ENCODE measurements at regions of chr15 and their contacts with region 1.

Region 1: DNA sequence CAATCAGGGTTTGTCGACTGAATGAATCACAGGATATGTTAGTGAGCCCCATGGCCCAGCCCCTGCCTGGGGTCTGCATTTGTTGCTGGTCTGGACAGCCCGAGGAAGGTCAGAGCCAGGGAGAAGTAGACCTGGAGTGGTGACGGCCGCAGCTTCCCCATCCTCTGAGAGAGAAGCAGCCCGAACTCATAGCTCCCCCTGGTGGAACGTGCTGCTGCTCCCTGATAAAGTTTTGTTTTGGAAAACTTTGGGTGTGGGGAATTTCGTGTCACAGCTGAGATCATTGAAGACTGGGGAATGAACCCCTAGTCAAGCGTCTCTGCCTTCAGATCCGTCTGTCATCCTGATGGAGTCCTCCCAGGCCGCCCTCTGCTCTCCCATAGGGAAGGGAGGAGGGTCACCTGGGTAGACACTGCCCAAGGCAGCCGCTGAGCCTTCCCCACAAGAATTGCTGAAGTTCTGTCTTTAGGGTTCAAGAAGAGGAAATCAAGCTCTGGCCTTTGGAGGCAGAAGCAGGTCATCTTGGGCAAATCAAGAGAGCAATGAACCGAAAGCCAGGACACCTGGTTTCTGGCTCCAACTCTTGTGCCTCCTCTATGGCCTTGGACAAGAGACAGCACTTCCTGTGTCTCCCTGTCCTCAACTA is 60.5 kb downstream of the GLDN start:
- DNase-seq: peak; percentile 13
- H3K4me3 ChIP-seq: no peak overlapping the region
- H3K27ac ChIP-seq: no peak overlapping the region
- H3K4me1 ChIP-seq: no peaks in the 10 kb centered on the region
- H3K27me3 ChIP-seq: peaks cover 68 to 69% of the 10 kb centered on the region in 2 experiments
- CTCF ChIP-seq: peak; percentile 73 to 83
- POLR2A ChIP-seq: no peak

Region 2: DNA sequence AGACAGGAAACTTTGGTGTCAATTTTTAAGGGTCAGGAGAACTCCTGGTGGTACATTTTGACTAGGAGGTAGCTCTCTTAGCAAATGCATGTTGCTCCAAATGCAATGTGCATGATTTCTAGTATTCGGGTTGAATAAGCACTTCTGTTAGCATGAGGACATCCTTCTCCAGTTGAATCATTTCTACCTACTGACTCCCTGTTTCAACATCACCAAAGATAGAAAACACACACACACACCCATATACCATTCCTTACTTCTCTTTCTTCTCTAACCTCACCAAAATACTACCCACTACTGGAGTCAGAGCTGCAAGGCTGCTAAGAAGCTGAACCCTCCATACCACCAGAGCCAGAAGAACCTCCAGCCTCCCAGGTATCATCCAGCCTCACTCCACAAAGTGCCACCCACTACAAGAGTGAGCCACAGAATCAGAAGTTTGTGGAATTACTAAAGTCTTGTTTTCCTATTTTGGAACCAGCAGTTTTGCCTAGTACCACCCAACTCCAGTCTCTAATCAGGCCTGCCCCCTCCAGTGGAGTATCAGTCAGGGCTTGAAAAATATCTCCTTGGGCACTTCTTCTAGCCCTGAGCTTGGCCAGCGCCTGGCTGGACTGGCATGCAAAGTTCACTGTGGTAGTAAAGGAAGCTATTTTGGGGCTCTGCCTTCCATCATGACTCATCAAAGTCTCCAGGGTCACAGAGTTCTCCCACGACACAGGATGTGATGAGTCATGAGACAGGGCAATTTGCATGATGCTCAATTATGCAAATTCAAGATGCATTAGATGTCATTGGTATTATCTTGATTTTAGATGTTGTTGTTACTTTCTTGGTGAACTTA is 173.8 kb before region 1 on chr15:
- CTCF ChIA-PET with region 1: interaction called, 32 read pairs
- POLR2A ChIA-PET with region 1: no interaction called
- dilution Hi-C with region 1: no loop called
- intact Hi-C with region 1: loop called (anchors 1 kb)
- DNase-seq: peak; percentile 60
- H3K4me3 ChIP-seq: no peak overlapping the region
- H3K27ac ChIP-seq: peak overlapping the region; percentile 11
- H3K4me1 ChIP-seq: peaks cover 27% of the 10 kb centered on the region
- H3K27me3 ChIP-seq: peaks cover 21 to 24% of the 10 kb centered on the region in 2 experiments
- CTCF ChIP-seq: no peak
- POLR2A ChIP-seq: no peak

Region 3: DNA sequence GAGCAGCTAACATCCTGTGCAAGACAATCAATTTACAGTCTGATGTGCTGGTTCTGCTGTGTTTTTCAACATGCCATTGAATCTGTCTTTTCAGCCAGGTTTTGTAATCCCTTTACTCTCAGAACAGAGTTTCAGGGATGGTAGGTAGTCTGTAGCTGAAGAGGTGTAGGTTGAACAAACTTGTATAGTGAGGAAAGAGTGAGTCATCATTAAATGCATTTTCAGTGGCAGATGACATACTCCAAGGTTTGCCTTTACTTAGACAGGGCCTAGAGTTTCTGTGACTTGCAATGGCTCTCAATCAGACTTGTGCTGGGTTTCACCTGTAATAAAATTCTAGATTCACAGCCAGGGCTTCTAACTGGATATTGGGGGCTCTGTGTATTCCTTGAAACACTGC is 158.2 kb before region 1 on chr15:
- CTCF ChIA-PET with region 1: no interaction called
- POLR2A ChIA-PET with region 1: no interaction called
- dilution Hi-C with region 1: no loop called
- intact Hi-C with region 1: no loop called
- DNase-seq: no peak
- H3K4me3 ChIP-seq: no peak overlapping the region
- H3K27ac ChIP-seq: no peak overlapping the region
- H3K4me1 ChIP-seq: no peaks in the 10 kb centered on the region
- H3K27me3 ChIP-seq: peaks cover 56 to 57% of the 10 kb centered on the region in 2 experiments
- CTCF ChIP-seq: no peak
- POLR2A ChIP-seq: no peak

Region 4: DNA sequence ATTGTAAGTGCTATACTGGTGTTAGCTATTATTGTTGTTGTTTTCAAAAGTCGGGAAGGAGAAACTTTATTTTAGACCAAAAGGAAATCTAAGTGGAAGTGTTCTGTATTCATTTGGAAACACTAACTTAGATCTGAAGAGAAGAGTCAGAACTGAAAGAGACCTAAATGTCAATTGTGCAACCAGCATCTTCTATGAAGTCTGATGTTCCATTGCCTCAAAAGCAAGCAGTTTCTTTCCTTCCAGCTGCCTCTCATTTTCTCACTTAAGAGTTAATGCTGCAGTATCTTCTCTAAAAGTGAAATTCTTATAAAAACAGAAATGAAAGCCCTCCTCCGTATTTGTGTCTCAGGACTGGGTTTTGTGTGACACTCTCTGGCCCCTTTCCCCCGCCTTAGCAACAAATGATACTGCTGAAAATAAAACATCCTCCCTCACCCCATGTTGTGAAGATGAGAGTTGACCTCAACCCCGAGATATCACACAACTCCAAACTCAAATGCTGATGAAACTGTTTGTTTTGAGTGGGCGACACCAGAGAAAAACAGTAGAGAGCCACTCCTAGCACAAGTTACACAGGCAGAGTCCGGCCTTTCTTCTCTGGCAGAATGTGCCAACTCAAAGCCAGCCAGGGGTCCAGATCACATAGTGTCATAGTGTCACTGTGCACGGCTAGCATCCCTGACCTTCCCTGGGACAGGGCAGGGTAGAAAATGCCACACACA is 11.6 kb before region 1 on chr15:
- CTCF ChIA-PET with region 1: interaction called, 12 read pairs
- POLR2A ChIA-PET with region 1: no interaction called
- dilution Hi-C with region 1: no loop called
- intact Hi-C with region 1: no loop called
- DNase-seq: no peak
- H3K4me3 ChIP-seq: no peak overlapping the region
- H3K27ac ChIP-seq: no peak overlapping the region
- H3K4me1 ChIP-seq: no peaks in the 10 kb centered on the region
- H3K27me3 ChIP-seq: peaks cover 30 to 31% of the 10 kb centered on the region in 2 experiments
- CTCF ChIP-seq: no peak
- POLR2A ChIP-seq: no peak

Region 5: GRCh38 chr15:51425517-51426367 is 23.7 kb after region 1 on chr15:
- CTCF ChIA-PET with region 1: interaction called, 10 read pairs
- POLR2A ChIA-PET with region 1: interaction called, 4 read pairs
- dilution Hi-C with region 1: no loop called
- intact Hi-C with region 1: no loop called
- DNase-seq: peak; percentile 5
- H3K4me3 ChIP-seq: no peak overlapping the region
- H3K27ac ChIP-seq: no peak overlapping the region
- H3K4me1 ChIP-seq: no peaks in the 10 kb centered on the region
- H3K27me3 ChIP-seq: peaks cover 0 to 2% of the 10 kb centered on the region in 2 experiments
- CTCF ChIP-seq: no peak
- POLR2A ChIP-seq: no peak

Region 6: DNA sequence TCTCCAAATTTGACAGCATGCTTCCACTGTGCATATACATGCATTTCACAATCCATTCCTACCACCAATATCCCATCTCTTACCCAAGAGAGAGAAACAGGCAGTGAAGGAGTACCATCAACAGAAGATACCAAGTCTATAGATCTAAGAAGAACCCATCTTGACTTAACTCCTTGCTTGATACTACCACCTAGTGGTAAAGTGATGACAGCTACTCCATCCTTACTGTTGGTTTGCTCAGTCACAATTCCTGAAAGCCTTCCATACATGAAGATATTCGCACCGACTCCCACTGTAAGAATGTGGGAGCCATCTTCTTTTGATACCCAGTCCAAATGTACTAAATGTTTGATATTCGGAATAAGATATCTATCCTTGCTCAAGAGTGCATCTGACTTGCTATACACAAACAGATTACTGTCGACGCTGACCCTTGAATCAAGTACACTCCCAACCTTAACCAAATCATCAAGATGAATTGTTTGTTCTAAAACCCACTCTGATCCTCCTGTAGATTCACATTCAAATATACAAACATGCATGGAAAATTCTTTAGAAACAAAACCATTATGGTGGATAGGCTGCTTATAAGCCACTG is 97.5 kb after region 1 on chr15:
- CTCF ChIA-PET with region 1: interaction called, 55 read pairs
- POLR2A ChIA-PET with region 1: no interaction called
- dilution Hi-C with region 1: no loop called
- intact Hi-C with region 1: loop called (anchors 1 kb)
- DNase-seq: peak; percentile 59
- H3K4me3 ChIP-seq: no peak overlapping the region
- H3K27ac ChIP-seq: no peak overlapping the region
- H3K4me1 ChIP-seq: peaks cover 19% of the 10 kb centered on the region
- H3K27me3 ChIP-seq: no peaks in the 10 kb centered on the region
- CTCF ChIP-seq: peak; percentile 61 to 66
- POLR2A ChIP-seq: no peak

Measured in endothelial cell of umbilical vein (primary cell).